Mammary epithelial cell (primary cell): ENCODE measurements at regions of chr3 and their contacts with region 1.

Region 1: DNA sequence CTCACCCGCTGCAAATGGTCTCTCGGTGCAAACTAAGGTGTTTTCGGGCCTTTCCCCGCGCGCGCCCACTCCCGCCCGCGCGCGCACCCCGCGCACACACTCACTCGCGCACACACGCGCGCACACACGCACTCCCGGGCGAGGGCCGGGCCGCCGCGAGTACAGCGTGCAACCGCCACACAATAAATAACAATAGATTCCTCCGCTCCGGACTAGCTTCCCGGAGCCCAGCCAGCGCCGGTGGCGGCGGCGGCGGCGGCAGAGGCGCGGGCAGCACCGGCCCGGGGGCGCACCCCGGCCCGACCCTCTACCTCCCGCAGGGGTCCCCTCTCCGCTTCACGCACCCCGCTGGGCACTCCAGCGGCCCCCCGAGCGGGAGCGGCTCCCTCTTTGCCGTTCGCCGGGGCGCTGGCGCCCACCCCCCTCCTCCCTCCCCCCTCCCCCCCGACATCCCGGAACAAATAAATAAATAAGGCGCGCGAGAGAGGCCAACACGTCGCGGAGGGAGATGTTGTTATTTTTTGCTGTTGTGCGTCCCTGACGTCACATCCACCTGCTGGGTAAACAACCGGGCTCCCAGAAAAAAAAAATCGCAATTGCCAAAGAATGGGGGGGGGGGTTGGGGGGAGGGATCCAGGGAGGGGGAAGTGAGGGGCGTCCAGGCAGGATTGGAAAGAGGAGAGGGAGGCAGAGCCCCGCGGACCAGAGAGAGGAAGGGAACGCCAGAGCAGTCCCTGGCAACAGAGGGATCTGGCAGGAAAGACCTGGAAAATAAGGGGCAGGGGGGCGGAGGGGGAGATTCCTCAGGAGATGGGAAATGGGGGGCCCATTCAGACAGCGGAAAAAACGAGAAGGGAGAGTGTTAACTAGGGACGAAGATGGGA is at the start of gene FOXP1:
- DNase-seq: peak; percentile 67
- H3K4me3 ChIP-seq: peak within 1 kb of the TSS; percentile 88 to 98 (median 89)
- H3K27ac ChIP-seq: peak within 1 kb of the TSS; percentile 80
- H3K4me1 ChIP-seq: peaks cover 15% of the 10 kb centered on the region
- H3K27me3 ChIP-seq: no peaks in the 10 kb centered on the region
- CTCF ChIP-seq: no peak
- total RNA-seq, gene FOXP1: 49.5 to 62.5 TPM

Region 2: GRCh38 chr3:70531063-70531657 is 1052.6 kb before region 1 on chr3:
- CTCF ChIA-PET with region 1: no interaction called
- dilution Hi-C with region 1: no loop called
- in situ Hi-C with region 1: no loop called
- intact Hi-C with region 1: loop called (anchors 5 kb)
- DNase-seq: peak; percentile 3
- H3K4me3 ChIP-seq: no peak overlapping the region
- H3K27ac ChIP-seq: no peak overlapping the region
- H3K4me1 ChIP-seq: no peaks in the 10 kb centered on the region
- H3K27me3 ChIP-seq: peaks cover 11% of the 10 kb centered on the region
- CTCF ChIP-seq: peak; percentile 51 to 55

Region 3: DNA sequence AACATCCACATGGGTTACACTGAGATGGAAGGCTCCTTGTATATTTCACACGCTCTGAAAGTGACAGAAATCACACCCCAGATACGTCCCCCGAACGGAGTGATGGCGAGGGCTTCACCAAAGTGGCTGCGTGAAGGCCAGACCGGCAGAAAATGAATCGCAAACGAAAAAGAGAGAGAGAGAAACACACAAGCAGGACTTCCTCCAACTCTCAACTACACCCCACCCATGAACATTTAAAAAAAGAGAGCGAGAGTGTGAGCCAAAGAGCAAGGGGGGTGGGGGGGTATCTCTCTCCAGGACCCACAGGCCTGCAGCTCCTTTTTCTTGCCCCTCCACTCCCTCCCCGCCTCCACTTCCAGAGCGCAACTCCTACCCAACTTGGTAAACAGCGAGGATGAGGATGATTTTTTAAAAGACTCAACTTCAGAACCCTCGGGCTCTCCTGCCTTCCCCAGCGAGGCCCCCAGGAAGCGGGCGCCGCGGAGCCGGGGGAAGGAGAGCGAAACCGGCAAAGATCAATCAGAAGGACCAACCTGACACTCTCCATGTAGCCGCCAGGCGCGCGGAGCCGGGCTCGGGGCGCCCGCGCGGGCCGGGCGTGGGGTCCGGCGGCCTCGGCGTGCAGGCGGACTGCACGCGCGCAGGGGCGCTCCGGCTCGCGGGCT is 519.4 kb before region 1 on chr3:
- CTCF ChIA-PET with region 1: no interaction called
- dilution Hi-C with region 1: loop called (anchors 5 kb)
- in situ Hi-C with region 1: loop called (anchors 10 to 25 kb)
- intact Hi-C with region 1: loop called (anchors 1 kb)
- DNase-seq: peak; percentile 65
- H3K4me3 ChIP-seq: peak overlapping the region; percentile 62 to 83 (median 63)
- H3K27ac ChIP-seq: peak overlapping the region; percentile 98
- H3K4me1 ChIP-seq: peaks cover 59% of the 10 kb centered on the region
- H3K27me3 ChIP-seq: no peaks in the 10 kb centered on the region
- CTCF ChIP-seq: peak in 1 of 2 donors; percentile 6

Region 4: DNA sequence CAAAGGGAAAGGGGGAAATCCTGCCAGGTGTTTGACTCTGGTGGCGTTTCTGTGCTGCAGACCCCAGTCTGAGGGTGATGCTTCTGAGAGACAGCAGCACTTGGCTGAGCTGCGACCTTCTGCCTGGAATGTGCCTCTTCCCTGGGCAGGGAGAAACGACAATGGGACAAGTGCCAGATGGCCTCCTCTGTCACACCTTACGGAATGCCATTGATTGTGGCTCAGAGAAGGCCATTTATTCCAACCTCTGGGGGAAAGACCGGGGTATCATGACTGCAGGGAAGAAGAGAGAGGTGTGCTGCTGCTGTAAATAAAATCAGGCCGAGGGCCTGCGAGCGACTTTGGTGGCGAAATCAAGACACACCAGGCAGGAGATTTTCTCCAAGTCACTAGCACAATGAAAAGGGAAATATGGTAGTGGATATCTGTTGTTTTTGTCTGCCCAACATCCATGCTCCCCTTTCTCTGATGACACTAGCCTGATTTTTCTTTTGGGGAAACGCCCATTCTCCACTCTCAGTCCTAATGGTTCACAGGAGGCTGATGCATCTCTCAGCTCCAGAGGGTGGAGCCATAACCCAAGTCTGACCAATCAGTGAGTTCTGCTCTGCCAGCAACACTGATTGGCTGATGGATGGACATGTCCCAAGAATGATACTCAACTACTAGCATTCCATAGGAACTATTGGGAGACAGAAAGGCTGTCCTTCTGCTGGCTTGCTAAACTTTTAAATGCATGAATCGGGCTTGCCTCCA is 336.4 kb before region 1 on chr3:
- CTCF ChIA-PET with region 1: no interaction called
- dilution Hi-C with region 1: no loop called
- in situ Hi-C with region 1: no loop called
- intact Hi-C with region 1: loop called (anchors 2 kb)
- DNase-seq: peak; percentile 61
- H3K4me3 ChIP-seq: no peak overlapping the region
- H3K27ac ChIP-seq: no peak overlapping the region
- H3K4me1 ChIP-seq: no peaks in the 10 kb centered on the region
- H3K27me3 ChIP-seq: no peaks in the 10 kb centered on the region
- CTCF ChIP-seq: no peak

Region 5: GRCh38 chr3:71428841-71429596 is 154.8 kb before region 1 on chr3:
- CTCF ChIA-PET with region 1: no interaction called
- dilution Hi-C with region 1: no loop called
- in situ Hi-C with region 1: loop called (anchors 10 kb)
- intact Hi-C with region 1: no loop called
- DNase-seq: peak; percentile 90
- H3K4me3 ChIP-seq: peak overlapping the region; percentile 18 to 30 (median 26)
- H3K27ac ChIP-seq: peak overlapping the region; percentile 92
- H3K4me1 ChIP-seq: peaks cover 63% of the 10 kb centered on the region
- H3K27me3 ChIP-seq: no peaks in the 10 kb centered on the region
- CTCF ChIP-seq: no peak

Region 6: DNA sequence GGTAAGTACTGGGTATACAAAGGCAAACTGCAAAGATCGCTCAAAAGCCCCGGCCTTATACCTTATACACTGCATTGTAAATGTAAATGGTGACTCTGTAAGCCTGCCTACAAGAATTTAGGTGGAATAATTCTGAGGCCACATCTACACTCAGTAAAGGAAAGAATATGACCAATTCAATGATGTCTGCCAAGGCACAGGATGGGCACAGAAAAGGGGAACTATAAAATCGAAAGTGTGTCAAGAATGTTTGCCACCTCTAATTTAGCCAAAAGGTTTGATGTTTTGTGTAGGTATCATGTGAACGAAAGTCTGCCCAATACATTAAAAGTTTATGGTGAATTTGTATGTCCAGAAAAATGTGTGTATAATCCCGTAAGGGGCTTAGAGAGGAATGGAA is 96.4 kb before region 1 on chr3:
- CTCF ChIA-PET with region 1: no interaction called
- dilution Hi-C with region 1: no loop called
- in situ Hi-C with region 1: no loop called
- intact Hi-C with region 1: no loop called
- DNase-seq: no peak
- H3K4me3 ChIP-seq: no peak overlapping the region
- H3K27ac ChIP-seq: no peak overlapping the region
- H3K4me1 ChIP-seq: no peaks in the 10 kb centered on the region
- H3K27me3 ChIP-seq: no peaks in the 10 kb centered on the region
- CTCF ChIP-seq: no peak

Region 7: GRCh38 chr3:71512000-71512399 is 71.8 kb before region 1 on chr3:
- CTCF ChIA-PET with region 1: no interaction called
- dilution Hi-C with region 1: no loop called
- in situ Hi-C with region 1: loop called in 1 of 2 experiments (anchors 10 kb)
- intact Hi-C with region 1: loop called (anchors 2 kb)
- DNase-seq: no peak
- H3K4me3 ChIP-seq: no peak overlapping the region
- H3K27ac ChIP-seq: no peak overlapping the region
- H3K4me1 ChIP-seq: peaks cover 37% of the 10 kb centered on the region
- H3K27me3 ChIP-seq: no peaks in the 10 kb centered on the region
- CTCF ChIP-seq: peak in 1 of 2 donors; percentile 13

Region 8: GRCh38 chr3:71681224-71681668 is 97.4 kb after region 1 on chr3:
- CTCF ChIA-PET with region 1: no interaction called
- dilution Hi-C with region 1: no loop called
- in situ Hi-C with region 1: no loop called
- intact Hi-C with region 1: loop called (anchors 2 kb)
- DNase-seq: peak; percentile 75
- H3K4me3 ChIP-seq: peak overlapping the region; percentile 25 to 32 (median 32)
- H3K27ac ChIP-seq: peak overlapping the region; percentile 29
- H3K4me1 ChIP-seq: peaks cover 43% of the 10 kb centered on the region
- H3K27me3 ChIP-seq: no peaks in the 10 kb centered on the region
- CTCF ChIP-seq: peak; percentile 92

Region 9: GRCh38 chr3:72482589-72483321 is 898.9 kb after region 1 on chr3:
- CTCF ChIA-PET with region 1: no interaction called
- dilution Hi-C with region 1: no loop called
- in situ Hi-C with region 1: no loop called
- intact Hi-C with region 1: no loop called
- DNase-seq: peak; percentile 76
- H3K4me3 ChIP-seq: peak overlapping the region; percentile 23 to 32 (median 29)
- H3K27ac ChIP-seq: peak overlapping the region; percentile 42
- H3K4me1 ChIP-seq: peaks cover 21% of the 10 kb centered on the region
- H3K27me3 ChIP-seq: no peaks in the 10 kb centered on the region
- CTCF ChIP-seq: no peak